Activated CD4-positive, alpha-beta memory T cell treated with anti-CD3 and anti-CD28 coated beads for 36 hours (primary cell): ENCODE measurements at regions of chrX and their contacts with region 1.

Region 1: GRCh38 chrX:31036895-31037294 is 34.9 kb downstream of the FTHL17 start:
- DNase-seq: peak; percentile 12
- H3K4me3 Mint-ChIP-seq: no peak overlapping the region
- H3K27ac Mint-ChIP-seq: no peak overlapping the region
- H3K4me1 Mint-ChIP-seq: no peaks in the 10 kb centered on the region
- H3K27me3 Mint-ChIP-seq: no peaks in the 10 kb centered on the region

Region 2: DNA sequence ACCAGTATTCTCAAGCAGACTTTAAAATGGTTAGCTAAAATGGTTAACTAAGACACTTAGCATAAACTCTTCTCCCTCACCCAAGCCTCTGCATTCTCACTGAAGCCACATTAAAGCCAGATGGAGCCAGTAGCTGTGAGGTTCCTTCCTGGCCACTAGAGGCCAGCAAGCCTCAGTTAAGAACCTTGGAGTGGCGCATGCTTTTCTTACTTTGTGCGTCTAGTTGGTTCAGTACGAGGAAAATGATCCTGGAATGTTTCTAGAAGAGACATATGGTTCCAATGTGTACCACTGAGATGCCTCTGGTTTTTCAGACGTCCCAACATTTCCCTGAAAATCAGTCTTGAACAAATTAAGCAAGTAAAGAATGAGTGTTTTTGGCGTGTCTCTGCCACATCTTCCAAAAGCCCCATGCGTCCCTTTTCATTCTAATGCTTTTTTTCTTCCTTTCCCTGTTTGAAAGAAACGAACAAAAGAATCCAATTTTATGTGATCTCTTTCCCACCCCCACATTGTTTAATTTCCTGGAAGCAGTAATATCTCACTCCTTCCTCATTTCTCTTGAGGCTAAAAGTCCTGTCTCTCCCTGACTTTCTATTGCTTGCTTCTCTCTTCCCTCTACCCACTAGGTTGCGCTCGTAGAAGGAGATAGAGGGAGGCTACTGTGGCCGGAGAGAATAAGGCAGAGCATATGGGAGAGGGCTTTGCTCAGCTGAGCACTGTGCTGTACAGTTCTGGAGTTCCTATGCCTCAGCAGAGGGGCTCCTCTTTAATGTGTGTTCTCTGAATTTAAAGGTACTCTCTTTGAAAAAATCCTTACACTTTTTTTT is 64.9 kb before region 1 on chrX:
- CTCF ChIA-PET with region 1: interaction called, 8 read pairs
- POLR2A ChIA-PET with region 1: no interaction called
- intact Hi-C with region 1: loop called (anchors 5 kb)
- DNase-seq: peak; percentile 19
- H3K4me3 Mint-ChIP-seq: peak overlapping the region; percentile 57
- H3K27ac Mint-ChIP-seq: no peak overlapping the region
- H3K4me1 Mint-ChIP-seq: peaks cover 11% of the 10 kb centered on the region
- H3K27me3 Mint-ChIP-seq: no peaks in the 10 kb centered on the region

Region 3: GRCh38 chrX:30997411-30997810 is 39.5 kb before region 1 on chrX:
- CTCF ChIA-PET with region 1: no interaction called
- POLR2A ChIA-PET with region 1: no interaction called
- intact Hi-C with region 1: no loop called
- DNase-seq: no peak
- H3K4me3 Mint-ChIP-seq: no peak overlapping the region
- H3K27ac Mint-ChIP-seq: no peak overlapping the region
- H3K4me1 Mint-ChIP-seq: peaks cover 6% of the 10 kb centered on the region
- H3K27me3 Mint-ChIP-seq: no peaks in the 10 kb centered on the region

Region 4: DNA sequence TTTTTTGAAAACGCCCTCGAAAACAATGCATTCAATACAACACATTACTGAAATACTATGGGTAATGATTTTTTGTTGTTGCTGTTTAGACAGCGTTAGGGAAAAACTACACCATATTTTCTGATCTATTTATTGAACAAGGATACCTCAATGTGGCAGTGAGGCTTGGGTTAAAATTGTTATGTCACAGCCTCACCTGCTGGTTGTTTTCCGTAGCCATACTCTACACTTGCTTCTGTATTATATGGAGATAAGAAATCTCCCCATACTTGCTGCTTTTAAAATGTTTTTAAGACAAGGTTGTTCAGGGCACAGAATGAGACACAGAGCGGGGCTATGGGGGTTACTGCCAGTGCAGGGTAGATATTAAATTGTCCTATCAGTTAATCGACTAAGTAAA is 256.5 kb after region 1 on chrX:
- CTCF ChIA-PET with region 1: interaction called, 9 read pairs
- POLR2A ChIA-PET with region 1: interaction called, 4 read pairs
- intact Hi-C with region 1: loop called (anchors 2 kb)
- DNase-seq: no peak
- H3K4me3 Mint-ChIP-seq: no peak overlapping the region
- H3K27ac Mint-ChIP-seq: no peak overlapping the region
- H3K4me1 Mint-ChIP-seq: no peaks in the 10 kb centered on the region
- H3K27me3 Mint-ChIP-seq: no peaks in the 10 kb centered on the region

Region 5: DNA sequence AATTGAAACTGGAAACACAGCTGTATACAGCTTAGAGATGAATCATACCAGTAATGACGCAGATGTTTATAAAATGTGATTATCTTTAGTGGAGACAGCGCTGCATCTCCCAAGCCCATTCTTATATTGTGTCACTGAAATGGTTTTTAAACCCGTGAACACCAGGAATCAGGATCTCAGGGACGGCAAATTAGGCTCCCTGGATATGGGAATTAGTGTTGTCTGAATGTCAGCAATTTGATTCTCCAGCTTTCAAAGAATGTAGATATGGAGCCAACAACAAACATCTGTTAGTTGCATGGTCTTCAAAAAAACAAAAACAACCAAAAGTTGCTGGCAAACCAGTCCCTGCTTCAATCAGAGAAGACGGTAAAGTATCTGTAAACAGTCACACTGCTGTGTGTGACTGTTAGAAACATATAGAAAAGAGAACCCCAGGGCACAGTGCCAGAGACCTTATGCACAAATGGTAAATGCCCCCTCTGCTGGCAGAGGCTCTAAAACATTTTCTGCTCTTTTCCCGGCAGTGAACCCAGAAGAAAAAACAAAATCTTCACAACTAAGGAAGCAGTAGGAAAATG is 386.8 kb after region 1 on chrX:
- CTCF ChIA-PET with region 1: interaction called, 4 read pairs
- POLR2A ChIA-PET with region 1: no interaction called
- intact Hi-C with region 1: loop called (anchors 5 kb)
- DNase-seq: peak; percentile 9
- H3K4me3 Mint-ChIP-seq: no peak overlapping the region
- H3K27ac Mint-ChIP-seq: no peak overlapping the region
- H3K4me1 Mint-ChIP-seq: no peaks in the 10 kb centered on the region
- H3K27me3 Mint-ChIP-seq: peaks cover 2% of the 10 kb centered on the region

Region 6: DNA sequence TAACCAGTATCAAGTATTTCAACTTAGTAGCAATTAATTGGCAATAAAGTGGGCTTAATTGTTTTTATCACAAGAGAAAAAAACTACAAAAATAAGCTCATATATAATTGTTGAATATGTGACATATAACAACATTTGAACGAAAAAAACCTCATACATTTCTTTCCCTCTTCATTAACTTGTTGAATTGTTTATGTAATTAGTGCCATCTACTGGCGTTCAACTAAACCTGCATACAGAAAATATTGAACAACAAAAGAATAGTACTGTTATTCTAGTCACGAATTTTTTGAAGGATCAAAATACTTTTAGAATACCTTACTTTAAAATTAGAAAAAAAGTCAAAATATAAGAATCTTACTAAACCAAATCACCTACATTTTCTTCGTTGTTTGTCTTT is 621.5 kb after region 1 on chrX:
- CTCF ChIA-PET with region 1: interaction called, 12 read pairs
- POLR2A ChIA-PET with region 1: no interaction called
- intact Hi-C with region 1: loop called (anchors 1 kb)
- DNase-seq: no peak
- H3K4me3 Mint-ChIP-seq: no peak overlapping the region
- H3K27ac Mint-ChIP-seq: no peak overlapping the region
- H3K4me1 Mint-ChIP-seq: no peaks in the 10 kb centered on the region
- H3K27me3 Mint-ChIP-seq: no peaks in the 10 kb centered on the region